ENCODE measurements at regions of chr3 and their contacts with region 1.

Region 1: GRCh38 chr3:100561459-100562158 is 47.8 kb upstream of the ADGRG7 start:
- DNase-seq: peak; percentile 90
- H3K4me3 ChIP-seq: peak overlapping the region in 1 of 3 experiments; percentile 12
- H3K27ac ChIP-seq: peak overlapping the region; percentile 82
- H3K4me1 ChIP-seq: peaks cover 39% of the 10 kb centered on the region
- H3K27me3 ChIP-seq: no peaks in the 10 kb centered on the region
- CTCF ChIP-seq: no peak

Region 2: DNA sequence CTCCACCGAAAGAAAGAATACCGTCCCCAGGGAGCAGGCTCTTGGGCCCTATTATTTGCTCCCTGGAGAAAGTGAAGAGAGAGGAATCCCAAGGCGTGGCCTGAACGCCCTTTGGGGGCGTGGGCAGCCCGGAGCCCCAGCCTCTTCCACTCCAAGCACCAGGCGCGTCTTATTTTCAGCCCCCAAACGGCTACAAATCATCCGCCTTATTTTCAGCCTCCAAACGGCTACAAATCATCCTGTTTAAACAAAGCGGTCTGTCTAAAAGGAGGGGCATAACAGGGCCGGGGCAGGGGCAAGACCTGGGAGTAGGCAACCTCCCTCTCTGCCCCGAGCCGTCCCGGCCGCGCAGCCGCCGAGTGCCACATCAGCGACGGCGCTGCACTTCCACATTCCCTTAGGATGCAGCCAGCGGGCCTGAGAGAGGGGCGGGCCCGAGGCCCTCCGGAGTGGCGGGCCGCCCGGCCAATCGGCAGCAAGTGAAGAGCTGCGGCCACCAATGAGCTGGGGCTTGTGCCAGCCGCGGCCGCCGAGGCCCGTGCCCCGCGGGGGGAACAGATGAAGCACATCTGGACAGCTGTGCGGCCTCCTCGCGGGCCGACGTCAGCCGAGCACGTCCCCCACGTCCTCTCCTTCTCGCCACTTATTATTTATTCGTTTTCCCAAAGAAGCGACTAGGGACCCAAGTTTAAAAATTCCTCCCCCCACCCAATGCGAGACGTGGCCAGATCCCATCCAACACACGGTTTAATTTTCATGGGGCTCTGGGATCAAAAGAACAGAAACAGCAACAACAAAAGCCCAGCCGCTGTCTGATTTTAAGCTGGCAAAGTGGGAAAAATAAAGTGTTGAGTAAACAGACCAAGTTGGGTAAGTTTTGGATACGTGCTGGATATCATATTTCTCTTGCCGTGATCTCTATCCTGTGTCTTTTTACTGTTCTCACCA is 69.3 kb before region 1 on chr3 and contains the start of gene TMEM45A:
- CTCF ChIA-PET with region 1: no interaction called
- dilution Hi-C with region 1: loop called (anchors 5 kb)
- in situ Hi-C with region 1: no loop called
- intact Hi-C with region 1: loop called (anchors 5 kb)
- DNase-seq: peak; percentile 94
- H3K4me3 ChIP-seq: peak within 1 kb of the TSS; percentile 57 to 96 (median 70)
- H3K27ac ChIP-seq: peak within 1 kb of the TSS; percentile 81
- H3K4me1 ChIP-seq: peaks cover 22% of the 10 kb centered on the region
- H3K27me3 ChIP-seq: no peaks in the 10 kb centered on the region
- CTCF ChIP-seq: no peak
- total RNA-seq, gene TMEM45A: 22.4 to 39.2 TPM

Region 3: GRCh38 chr3:100525753-100526612 is 35.6 kb before region 1 on chr3:
- CTCF ChIA-PET with region 1: no interaction called
- dilution Hi-C with region 1: loop called (anchors 5 kb)
- in situ Hi-C with region 1: no loop called
- intact Hi-C with region 1: no loop called
- DNase-seq: peak; percentile 99
- H3K4me3 ChIP-seq: peak overlapping the region in 1 of 3 experiments; percentile 12
- H3K27ac ChIP-seq: peak overlapping the region; percentile 94
- H3K4me1 ChIP-seq: peaks cover 21% of the 10 kb centered on the region
- H3K27me3 ChIP-seq: no peaks in the 10 kb centered on the region
- CTCF ChIP-seq: no peak

Region 4: GRCh38 chr3:101069901-101070798 is 508.5 kb after region 1 on chr3:
- CTCF ChIA-PET with region 1: no interaction called
- dilution Hi-C with region 1: no loop called
- in situ Hi-C with region 1: no loop called
- intact Hi-C with region 1: no loop called
- DNase-seq: no peak
- H3K4me3 ChIP-seq: no peak overlapping the region
- H3K27ac ChIP-seq: no peak overlapping the region
- H3K4me1 ChIP-seq: peaks cover 22% of the 10 kb centered on the region
- H3K27me3 ChIP-seq: no peaks in the 10 kb centered on the region
- CTCF ChIP-seq: peak; percentile 62 to 82

Measured in mammary epithelial cell (primary cell).